HCT116 (cell line): ENCODE measurements at regions of chr1 and their contacts with region 1.

Region 1: GRCh38 chr1:47527658-47528255 is 89.9 kb downstream of the FOXD2 start:
- DNase-seq: peak; percentile 15
- ATAC-seq: peak; percentile 78
- H3K4me3 ChIP-seq: no peak overlapping the region
- H3K27ac ChIP-seq: no peak overlapping the region
- H3K4me1 ChIP-seq: no peaks in the 10 kb centered on the region
- H3K27me3 ChIP-seq: no peaks in the 10 kb centered on the region
- CTCF ChIP-seq: peak; percentile 57 to 80 (median 63)
- POLR2A ChIP-seq: no peak
- RAD21 ChIP-seq: peak; percentile 83

Region 2: DNA sequence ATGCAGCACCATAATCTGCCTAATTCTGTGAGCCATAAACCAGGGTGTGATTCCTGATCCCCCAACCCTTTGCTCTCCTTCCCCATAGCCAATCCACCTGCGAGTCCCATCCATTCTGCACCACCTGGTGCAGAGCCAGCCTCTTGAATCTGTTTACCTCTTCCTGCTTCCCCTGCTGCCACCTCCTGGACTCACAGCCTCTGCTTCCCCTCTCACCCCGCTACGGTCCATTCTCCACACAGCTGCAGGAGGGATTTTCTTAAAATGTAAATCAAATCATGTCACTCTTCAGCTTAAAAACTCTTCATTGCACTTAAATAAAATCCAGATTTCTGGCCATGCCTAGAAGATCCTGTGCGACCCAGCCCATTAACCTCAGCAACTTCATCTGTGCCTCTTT is 96.8 kb after region 1 on chr1:
- CTCF ChIA-PET with region 1: no interaction called
- POLR2A ChIA-PET with region 1: no interaction called
- RAD21 ChIA-PET with region 1: no interaction called
- intact Hi-C with region 1: loop called (anchors 1 kb)
- DNase-seq: peak; percentile 32
- ATAC-seq: peak; percentile 94
- H3K4me3 ChIP-seq: no peak overlapping the region
- H3K27ac ChIP-seq: no peak overlapping the region
- H3K4me1 ChIP-seq: no peaks in the 10 kb centered on the region
- H3K27me3 ChIP-seq: no peaks in the 10 kb centered on the region
- CTCF ChIP-seq: peak; percentile 58 to 98 (median 66)
- POLR2A ChIP-seq: no peak
- RAD21 ChIP-seq: peak; percentile 81

Region 3: GRCh38 chr1:47703981-47704596 is 176.3 kb after region 1 on chr1:
- CTCF ChIA-PET with region 1: interaction called, 12 read pairs
- POLR2A ChIA-PET with region 1: no interaction called
- RAD21 ChIA-PET with region 1: no interaction called
- intact Hi-C with region 1: no loop called
- DNase-seq: peak; percentile 15
- ATAC-seq: peak; percentile 77
- H3K4me3 ChIP-seq: no peak overlapping the region
- H3K27ac ChIP-seq: no peak overlapping the region
- H3K4me1 ChIP-seq: peaks cover 0 to 7% of the 10 kb centered on the region in 2 experiments; a peak in 1 of 4 replicates
- H3K27me3 ChIP-seq: no peaks in the 10 kb centered on the region
- CTCF ChIP-seq: peak; percentile 23 to 58 (median 47); a peak in 4 of 6 replicates
- POLR2A ChIP-seq: no peak
- RAD21 ChIP-seq: peak; percentile 59

Region 4: DNA sequence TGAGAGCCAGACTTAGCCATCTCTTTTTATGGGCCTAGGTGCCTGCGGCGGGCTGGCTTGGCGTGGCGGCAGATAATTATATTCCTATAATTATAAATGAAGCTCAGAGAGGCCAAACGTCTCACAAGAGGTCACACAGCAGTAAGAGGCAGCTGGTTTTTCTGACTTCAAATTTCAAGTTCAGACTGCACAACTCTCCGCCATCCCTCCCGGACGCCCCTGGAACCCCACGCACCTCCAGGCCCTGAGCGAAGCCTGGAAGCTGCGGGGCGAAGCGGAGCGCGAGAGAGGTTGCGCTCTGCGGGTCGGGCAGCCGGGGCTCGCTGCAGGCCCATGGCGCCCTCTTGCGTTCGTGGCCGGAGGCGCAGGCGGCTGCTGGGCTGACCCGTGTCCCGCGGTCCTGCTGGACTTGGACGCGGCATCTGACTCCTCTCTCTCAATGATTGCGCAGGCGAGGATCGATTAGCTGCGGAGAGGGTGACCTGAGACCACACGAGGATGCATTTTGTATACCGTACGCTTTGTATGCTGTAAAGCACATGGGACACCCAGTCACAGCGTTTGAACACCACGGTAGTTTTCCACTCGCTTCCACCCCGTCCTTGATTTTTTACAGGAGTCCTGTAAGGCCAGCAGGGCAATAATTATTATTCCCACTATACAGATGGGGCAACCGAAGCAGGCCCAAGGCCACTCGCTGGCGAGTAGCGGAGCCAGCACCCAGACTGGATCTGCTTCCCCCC is 182.7 kb after region 1 on chr1:
- CTCF ChIA-PET with region 1: interaction called, 5 read pairs
- POLR2A ChIA-PET with region 1: no interaction called
- RAD21 ChIA-PET with region 1: no interaction called
- intact Hi-C with region 1: loop called (anchors 1 kb)
- DNase-seq: peak; percentile 28
- ATAC-seq: peak; percentile 88
- H3K4me3 ChIP-seq: peak overlapping the region; percentile 16 to 57; a peak in 3 of 4 replicates
- H3K27ac ChIP-seq: no peak overlapping the region
- H3K4me1 ChIP-seq: peaks cover 0 to 18% of the 10 kb centered on the region in 2 experiments; a peak in 1 of 4 replicates
- H3K27me3 ChIP-seq: peaks cover 28% of the 10 kb centered on the region
- CTCF ChIP-seq: peak; percentile 91 to 98 (median 92)
- POLR2A ChIP-seq: no peak
- RAD21 ChIP-seq: peak; percentile 96